Common myeloid progenitor, CD34-positive (primary cell): ENCODE measurements at regions of chr7 and their contacts with region 1.

Region 1: DNA sequence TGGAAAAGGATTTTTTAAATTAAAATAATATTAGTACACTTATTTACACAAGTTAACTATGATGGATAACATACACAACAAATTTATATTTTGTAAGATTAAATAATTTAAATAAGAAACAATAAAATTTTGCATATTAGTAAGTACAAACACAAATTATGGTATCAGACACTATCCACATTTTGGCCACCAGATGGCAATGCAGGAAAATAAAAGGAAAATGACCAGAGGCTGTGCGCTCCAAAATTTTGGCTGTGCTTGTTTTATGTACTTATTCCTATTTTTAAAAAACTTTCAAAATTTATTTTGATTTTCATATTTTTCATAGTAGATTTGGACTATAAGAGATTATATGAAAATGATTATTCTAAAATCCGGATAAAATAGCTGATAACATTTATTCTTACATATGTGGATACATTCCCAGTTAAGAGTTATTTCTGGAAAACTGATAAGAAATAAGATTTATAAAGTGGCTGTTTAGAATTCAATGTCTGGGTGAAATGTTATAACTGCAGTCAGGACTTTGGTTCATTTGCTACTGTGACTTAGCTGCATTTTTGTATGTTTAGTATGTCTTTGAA is 274.7 kb upstream of the HGF start:
- DNase-seq: peak; percentile 50 to 74 (median 70)
- H3K4me3 ChIP-seq: no peak overlapping the region
- H3K27ac ChIP-seq: no peak overlapping the region
- H3K4me1 ChIP-seq: peaks cover 0 to 3% (median 0%) of the 10 kb centered on the region in 4 experiments
- H3K27me3 ChIP-seq: no peaks in the 10 kb centered on the region

Region 2: DNA sequence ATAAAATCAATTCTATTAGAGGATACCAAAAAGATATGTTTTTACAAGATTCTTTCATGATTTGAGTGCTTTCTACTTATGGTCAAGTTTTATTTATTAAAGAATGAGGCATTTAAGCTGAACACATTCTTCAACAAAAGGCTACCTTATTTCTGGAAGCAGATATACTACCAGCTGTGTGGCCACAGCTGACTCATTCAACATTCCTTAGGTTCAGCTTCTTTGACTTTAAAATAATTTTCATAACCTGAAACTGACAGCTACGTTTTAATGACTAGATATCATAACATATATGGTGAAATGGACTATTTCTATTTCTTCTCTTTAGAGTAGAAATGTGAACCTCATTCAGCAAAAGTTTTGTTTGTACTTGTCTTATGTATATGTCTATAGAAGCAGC is 711.6 kb before region 1 on chr7:
- CTCF ChIA-PET with region 1: no interaction called
- POLR2A ChIA-PET with region 1: no interaction called
- DNase-seq: no peak
- H3K4me3 ChIP-seq: no peak overlapping the region
- H3K27ac ChIP-seq: no peak overlapping the region
- H3K4me1 ChIP-seq: no peaks in the 10 kb centered on the region
- H3K27me3 ChIP-seq: no peaks in the 10 kb centered on the region

Region 3: DNA sequence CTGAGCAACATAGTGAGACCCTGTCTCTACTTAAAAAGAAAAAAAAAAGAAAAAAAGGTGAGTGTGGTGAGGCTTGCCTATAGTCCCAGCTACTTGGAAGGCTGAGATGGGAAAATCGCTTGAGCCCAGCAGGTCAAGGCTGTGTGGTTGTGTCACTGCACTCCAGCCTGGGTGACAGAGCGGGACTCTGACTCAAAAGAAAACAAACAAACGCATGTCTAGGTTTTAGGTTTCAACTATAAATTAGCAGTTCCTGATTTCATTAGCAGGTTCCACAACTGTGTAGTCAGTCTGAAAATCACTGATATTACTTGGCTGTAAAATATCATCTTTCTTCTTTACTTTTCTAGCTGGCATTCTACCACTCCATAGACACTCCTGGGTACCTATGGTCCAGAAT is 119.1 kb before region 1 on chr7:
- CTCF ChIA-PET with region 1: no interaction called
- POLR2A ChIA-PET with region 1: no interaction called
- DNase-seq: no peak
- H3K4me3 ChIP-seq: no peak overlapping the region
- H3K27ac ChIP-seq: no peak overlapping the region
- H3K4me1 ChIP-seq: no peaks in the 10 kb centered on the region
- H3K27me3 ChIP-seq: no peaks in the 10 kb centered on the region

Region 4: DNA sequence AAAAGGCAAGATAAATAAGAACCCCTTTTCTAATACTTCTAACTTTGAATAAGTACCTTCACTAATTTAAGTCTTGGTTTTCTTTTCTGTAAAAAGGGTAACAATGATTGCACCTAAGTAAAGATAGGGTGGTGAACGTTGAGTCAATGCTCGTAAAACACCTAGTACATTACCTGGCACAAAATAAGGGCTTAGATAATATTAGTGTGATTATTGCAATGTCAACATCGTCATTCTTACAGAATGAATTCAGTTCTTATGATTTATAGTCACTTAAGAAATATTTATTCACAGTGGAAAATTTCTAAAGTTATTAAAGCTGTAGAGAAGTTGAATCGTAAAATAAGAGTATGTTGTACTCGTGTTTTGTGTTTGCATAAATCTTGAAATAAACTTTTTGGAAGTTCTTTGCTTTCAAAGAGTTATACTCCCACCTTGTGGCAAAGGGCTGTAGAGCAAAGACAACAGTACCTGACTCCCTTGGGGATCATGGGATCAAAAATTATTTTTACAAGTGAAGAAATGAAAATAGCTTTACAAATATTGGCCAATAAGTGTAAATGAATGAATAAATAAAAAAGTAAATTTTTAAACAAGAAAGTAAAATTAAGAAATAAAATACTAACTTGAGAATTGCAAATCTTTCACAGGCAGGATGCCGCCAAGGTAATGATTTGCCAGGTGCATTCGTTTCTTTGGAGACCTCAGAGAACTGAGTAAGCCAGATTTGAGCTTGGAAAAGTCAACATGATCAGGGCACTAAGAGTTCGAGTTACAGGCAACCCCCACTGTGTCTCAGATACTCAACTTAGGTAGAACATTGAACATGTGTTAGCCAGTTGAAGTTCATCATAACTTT is 684.8 kb after region 1 on chr7:
- CTCF ChIA-PET with region 1: interaction called, 22 read pairs
- POLR2A ChIA-PET with region 1: no interaction called
- DNase-seq: peak; percentile 34 to 60 (median 47)
- H3K4me3 ChIP-seq: no peak overlapping the region
- H3K27ac ChIP-seq: no peak overlapping the region
- H3K4me1 ChIP-seq: no peaks in the 10 kb centered on the region
- H3K27me3 ChIP-seq: no peaks in the 10 kb centered on the region